Activated naive CD8-positive, alpha-beta T cell treated with anti-CD3 and anti-CD28 coated beads, Interleukin-2, amount 10 ng/mL, durations not matched to agents 7 days and 5 days (primary cell): ENCODE measurements at regions of chr19 and their contacts with region 1.

Region 1: DNA sequence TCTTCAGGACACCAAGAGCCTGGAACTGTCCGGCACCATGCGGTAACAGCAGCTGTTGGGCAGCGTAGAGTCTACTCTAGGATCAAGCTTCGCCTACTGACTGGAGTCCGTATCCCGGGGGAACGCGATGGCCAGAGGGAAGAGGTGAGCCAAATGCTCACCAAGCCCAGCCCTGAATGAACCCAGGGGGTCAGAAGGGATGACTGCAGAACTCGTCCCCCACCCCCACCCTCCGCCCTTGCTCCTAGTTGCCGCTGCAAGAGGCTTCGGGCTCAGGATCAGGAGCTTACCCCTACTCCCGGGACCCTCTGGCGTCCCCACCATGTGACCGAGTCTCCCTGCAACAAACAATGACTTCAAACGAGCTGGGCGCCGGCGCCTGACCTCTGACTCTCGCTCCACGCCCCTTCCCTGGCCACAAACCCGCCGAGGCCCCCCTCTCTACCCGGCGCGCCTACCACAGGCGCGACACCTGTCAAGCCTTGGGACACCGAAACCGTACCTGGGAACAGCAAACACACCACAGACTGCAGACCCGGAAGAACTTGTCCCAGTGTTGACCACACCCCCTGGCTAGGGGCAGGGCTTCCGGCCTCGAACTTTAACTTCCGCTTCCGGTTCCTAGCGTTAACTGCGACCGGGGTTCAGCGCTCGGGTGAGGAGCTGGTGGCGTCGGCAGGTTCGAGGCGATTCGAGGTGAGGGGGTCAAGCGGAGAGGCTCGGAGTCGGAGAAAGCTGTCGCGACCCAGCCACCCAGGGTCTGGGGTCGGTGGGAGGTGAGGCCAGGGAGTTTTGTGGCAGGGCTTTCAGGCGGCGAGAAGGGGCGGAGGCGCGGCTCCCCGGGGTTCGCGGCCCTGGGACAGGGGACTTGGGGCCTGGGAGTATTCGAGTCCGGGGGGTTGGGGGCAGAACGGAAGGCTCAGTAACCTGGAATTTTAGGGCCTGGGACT is at the start of gene UBL5:
- DNase-seq: peak; percentile 87
- ATAC-seq: peak; percentile 94
- H3K4me3 Mint-ChIP-seq: peak within 1 kb of the TSS; percentile 100
- H3K27ac Mint-ChIP-seq: peak within 1 kb of the TSS; percentile 100
- H3K4me1 Mint-ChIP-seq: peaks cover 18% of the 10 kb centered on the region
- H3K27me3 Mint-ChIP-seq: no peaks in the 10 kb centered on the region
- total RNA-seq, gene UBL5: 310 to 340 TPM

Region 2: GRCh38 chr19:9735986-9736385 is 91.6 kb before region 1 on chr19:
- POLR2A ChIA-PET with region 1: no interaction called
- DNase-seq: no peak
- ATAC-seq: no peak
- H3K4me3 Mint-ChIP-seq: no peak overlapping the region
- H3K27ac Mint-ChIP-seq: no peak overlapping the region
- H3K4me1 Mint-ChIP-seq: no peaks in the 10 kb centered on the region
- H3K27me3 Mint-ChIP-seq: no peaks in the 10 kb centered on the region

Region 3: GRCh38 chr19:9857920-9858746 is 30.6 kb after region 1 on chr19:
- POLR2A ChIA-PET with region 1: interaction called, 26 read pairs
- DNase-seq: peak; percentile 49
- ATAC-seq: peak; percentile 63
- H3K4me3 Mint-ChIP-seq: peak overlapping the region; percentile 98
- H3K27ac Mint-ChIP-seq: peak overlapping the region; percentile 100
- H3K4me1 Mint-ChIP-seq: peaks cover 51% of the 10 kb centered on the region
- H3K27me3 Mint-ChIP-seq: no peaks in the 10 kb centered on the region

Region 4: GRCh38 chr19:9865732-9866501 is 38.4 kb after region 1 on chr19:
- POLR2A ChIA-PET with region 1: interaction called, 26 read pairs
- DNase-seq: no peak
- ATAC-seq: peak; percentile 77
- H3K4me3 Mint-ChIP-seq: peak overlapping the region; percentile 77
- H3K27ac Mint-ChIP-seq: peak overlapping the region; percentile 84
- H3K4me1 Mint-ChIP-seq: peaks cover 49% of the 10 kb centered on the region
- H3K27me3 Mint-ChIP-seq: no peaks in the 10 kb centered on the region